ENCODE measurements at regions of chr17 and their contacts with region 1.

Region 1: DNA sequence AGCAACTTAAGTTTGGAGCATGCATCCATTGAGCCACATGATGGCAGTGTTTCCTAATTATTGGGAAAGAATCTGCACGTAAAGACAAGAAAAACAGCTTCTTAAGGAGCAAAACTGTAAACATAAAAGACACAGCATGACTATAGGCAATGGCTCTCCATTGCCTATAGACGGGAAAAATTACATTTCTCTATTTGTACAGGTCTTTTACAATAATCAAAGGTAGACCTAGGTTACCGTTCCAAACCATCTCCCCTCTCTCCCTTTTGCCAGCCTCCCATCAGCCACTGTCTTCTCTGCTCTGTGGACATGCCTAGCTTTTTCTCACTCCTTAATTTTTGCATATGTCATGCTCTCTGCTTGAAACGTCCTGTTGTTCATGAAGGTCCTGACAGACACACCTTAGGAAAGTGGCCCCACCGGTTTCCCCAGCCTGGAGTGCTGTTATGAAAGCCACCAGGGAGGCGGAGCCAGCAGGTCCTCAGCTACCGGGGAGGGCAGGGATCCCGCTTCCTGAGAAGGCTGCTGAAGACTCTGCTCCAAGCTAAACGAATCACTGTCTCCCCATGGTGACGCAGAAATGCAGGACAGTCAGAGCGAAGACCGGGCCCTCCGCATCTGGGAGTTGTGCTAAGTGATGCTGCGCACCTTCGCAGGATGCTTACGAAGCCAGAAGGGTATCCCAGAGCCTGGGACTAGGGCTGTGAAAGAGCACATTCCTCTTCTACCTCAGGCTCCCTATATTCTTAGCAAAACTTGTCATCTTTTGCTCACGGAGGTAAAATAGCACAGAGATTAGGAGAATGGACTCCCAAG is 2.2 kb upstream of the SLC16A11 start:
- DNase-seq: peak; percentile 65
- ATAC-seq: peak; percentile 18
- H3K4me3 Mint-ChIP-seq: peak overlapping the region; percentile 80
- H3K27ac Mint-ChIP-seq: no peak overlapping the region
- H3K4me1 Mint-ChIP-seq: peaks cover 17% of the 10 kb centered on the region
- H3K27me3 Mint-ChIP-seq: peaks cover 52% of the 10 kb centered on the region
- CTCF ChIP-seq: peak; percentile 69

Region 2: GRCh38 chr17:7035591-7036368 is 10.3 kb before region 1 on chr17 and contains the start of gene SLC16A13:
- CTCF ChIA-PET with region 1: interaction called, 21 read pairs
- POLR2A ChIA-PET with region 1: interaction called, 3 read pairs
- DNase-seq: peak; percentile 94
- ATAC-seq: peak; percentile 92
- H3K4me3 Mint-ChIP-seq: peak within 1 kb of the TSS; percentile 94
- H3K27ac Mint-ChIP-seq: peak within 1 kb of the TSS; percentile 87; the same call in 1 of the 2 replicates
- H3K4me1 Mint-ChIP-seq: peaks cover 20% of the 10 kb centered on the region
- H3K27me3 Mint-ChIP-seq: peaks cover 20% of the 10 kb centered on the region
- CTCF ChIP-seq: no peak
- total RNA-seq, gene SLC16A13: 5.2 to 7.1 TPM (median 6.9 TPM) in 3 replicates

Region 3: GRCh38 chr17:7095625-7096024 is 49.5 kb after region 1 on chr17:
- CTCF ChIA-PET with region 1: no interaction called
- POLR2A ChIA-PET with region 1: no interaction called
- DNase-seq: no peak
- ATAC-seq: no peak
- H3K4me3 Mint-ChIP-seq: no peak overlapping the region
- H3K27ac Mint-ChIP-seq: no peak overlapping the region
- H3K4me1 Mint-ChIP-seq: peaks cover 10% of the 10 kb centered on the region; the same call in 1 of the 2 replicates
- H3K27me3 Mint-ChIP-seq: peaks cover 12% of the 10 kb centered on the region
- CTCF ChIP-seq: no peak

Region 4: GRCh38 chr17:7141824-7142223 is 95.7 kb after region 1 on chr17:
- CTCF ChIA-PET with region 1: interaction called, 105 read pairs
- POLR2A ChIA-PET with region 1: interaction called, 9 read pairs
- DNase-seq: no peak
- ATAC-seq: no peak
- H3K4me3 Mint-ChIP-seq: no peak overlapping the region
- H3K27ac Mint-ChIP-seq: peak overlapping the region; percentile 1; the same call in 1 of the 2 replicates
- H3K4me1 Mint-ChIP-seq: peaks cover 61% of the 10 kb centered on the region
- H3K27me3 Mint-ChIP-seq: peaks cover 9% of the 10 kb centered on the region
- CTCF ChIP-seq: no peak

Region 5: DNA sequence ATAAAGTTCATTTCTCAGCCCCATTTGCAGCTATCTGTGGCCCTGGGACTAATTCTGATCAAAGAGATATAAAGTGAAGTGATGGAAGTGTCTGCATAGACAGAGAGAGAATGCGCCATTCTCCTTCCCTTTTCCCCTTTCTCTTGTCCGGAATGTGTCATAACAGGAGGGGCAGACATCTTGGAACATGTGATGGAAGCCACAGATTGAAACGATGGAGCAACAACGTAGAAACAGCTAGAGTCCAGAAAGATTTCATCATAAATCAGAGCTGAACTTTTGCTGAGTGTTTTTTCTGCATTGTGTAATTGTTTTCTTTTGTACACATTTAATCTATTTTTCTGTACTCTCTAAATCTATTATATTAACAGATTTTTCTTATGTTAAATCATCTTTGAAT is 121.7 kb after region 1 on chr17:
- CTCF ChIA-PET with region 1: interaction called, 104 read pairs
- POLR2A ChIA-PET with region 1: no interaction called
- DNase-seq: no peak
- ATAC-seq: no peak
- H3K4me3 Mint-ChIP-seq: no peak overlapping the region
- H3K27ac Mint-ChIP-seq: no peak overlapping the region
- H3K4me1 Mint-ChIP-seq: peaks cover 4% of the 10 kb centered on the region
- H3K27me3 Mint-ChIP-seq: no peaks in the 10 kb centered on the region; the same call in none of the 2 replicates
- CTCF ChIP-seq: no peak

Region 6: DNA sequence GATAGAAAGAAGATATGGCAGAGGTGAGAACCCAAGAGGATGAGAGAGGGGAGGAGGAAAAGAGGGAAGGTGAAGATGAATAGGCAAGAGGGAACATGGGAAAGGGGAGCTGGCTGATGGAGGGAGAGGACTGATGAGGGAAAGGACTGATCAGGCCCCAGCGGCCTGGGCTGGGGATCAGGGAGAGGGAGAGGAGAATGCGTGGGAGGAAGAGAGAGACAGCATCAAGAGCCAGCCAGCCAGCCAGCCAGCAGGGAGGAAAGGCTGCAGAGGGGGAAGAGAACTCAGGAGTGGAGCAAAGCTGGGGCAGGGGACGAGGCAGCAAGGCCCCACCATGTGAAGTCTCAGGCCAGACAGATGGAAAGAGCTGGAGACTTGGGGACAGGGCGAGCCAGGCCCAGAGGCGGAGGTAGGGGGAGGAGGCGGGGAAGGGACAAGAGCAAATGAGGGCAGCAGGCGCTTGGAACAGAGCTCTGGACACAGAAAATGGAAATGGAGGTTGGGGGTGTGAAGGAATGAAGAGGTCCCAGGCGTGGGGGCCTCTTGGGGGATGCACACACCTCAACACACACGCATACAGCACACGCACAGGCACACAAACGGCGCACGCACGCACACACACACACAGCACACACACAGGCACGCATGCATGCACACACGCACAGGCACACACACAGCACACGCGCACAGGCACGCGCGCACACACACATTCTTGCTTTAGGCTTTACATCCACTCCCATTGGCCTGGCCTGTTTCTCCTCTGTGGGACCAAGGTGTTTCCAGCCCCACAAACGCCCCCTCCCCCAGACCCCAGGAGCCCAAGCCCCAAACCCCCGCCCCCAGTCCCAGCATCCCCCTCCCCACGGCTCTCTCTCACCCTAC is 161.2 kb after region 1 on chr17:
- CTCF ChIA-PET with region 1: interaction called, 10 read pairs
- POLR2A ChIA-PET with region 1: no interaction called
- DNase-seq: no peak
- ATAC-seq: no peak
- H3K4me3 Mint-ChIP-seq: peak overlapping the region; percentile 59
- H3K27ac Mint-ChIP-seq: peak overlapping the region; percentile 29; the same call in 1 of the 2 replicates
- H3K4me1 Mint-ChIP-seq: peaks cover 55% of the 10 kb centered on the region
- H3K27me3 Mint-ChIP-seq: no peaks in the 10 kb centered on the region
- CTCF ChIP-seq: no peak

Region 7: GRCh38 chr17:7219812-7220581 is 173.9 kb after region 1 on chr17 and contains the starts of genes ACADVL and DLG4:
- CTCF ChIA-PET with region 1: interaction called, 16 read pairs
- POLR2A ChIA-PET with region 1: no interaction called
- DNase-seq: peak; percentile 90
- ATAC-seq: peak; percentile 58
- H3K4me3 Mint-ChIP-seq: peak within 1 kb of the TSS; percentile 89
- H3K27ac Mint-ChIP-seq: peak within 1 kb of the TSS; percentile 93
- H3K4me1 Mint-ChIP-seq: peaks cover 48% of the 10 kb centered on the region
- H3K27me3 Mint-ChIP-seq: peaks cover 4% of the 10 kb centered on the region; the same call in 1 of the 2 replicates
- CTCF ChIP-seq: no peak
- total RNA-seq, gene ACADVL: 213 to 236 TPM (median 221 TPM) in 3 replicates
- total RNA-seq, gene DLG4: 47.1 to 59.7 TPM (median 48.0 TPM) in 3 replicates

Measured in WTC11 (cell line).